Naive thymus-derived CD4-positive, alpha-beta T cell (primary cell): ENCODE measurements at regions of chr11 and their contacts with region 1.

Region 1: DNA sequence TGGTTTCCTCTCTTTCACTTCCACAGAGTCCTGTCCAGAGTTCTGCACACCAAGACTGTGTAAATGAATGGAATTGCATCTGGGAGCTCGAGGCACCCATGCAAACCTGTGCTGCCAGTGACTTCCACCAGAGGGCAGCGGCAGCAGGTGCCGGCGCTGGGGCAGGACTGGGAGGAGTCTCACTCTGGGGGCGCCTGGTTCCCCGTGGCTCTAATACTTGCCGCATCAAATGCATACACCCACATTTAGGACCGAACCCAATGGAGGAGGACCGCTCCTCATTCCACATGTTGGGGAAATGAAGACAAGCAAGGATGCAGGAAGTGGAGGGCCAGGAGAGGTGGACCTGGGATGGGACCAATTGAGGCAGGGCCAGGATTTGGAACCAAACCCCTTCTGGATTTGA is 1.1 kb upstream of the CD6 start:
- DNase-seq: peak; percentile 66 to 85 (median 80)
- ATAC-seq: peak; percentile 83
- H3K4me3 ChIP-seq: peak overlapping the region; percentile 83
- H3K4me3 Mint-ChIP-seq: peak overlapping the region; percentile 92 to 98 (median 96)
- H3K27ac ChIP-seq: peak overlapping the region; percentile 96
- H3K27ac Mint-ChIP-seq: peak overlapping the region; percentile 39 to 99 (median 95)
- H3K4me1 ChIP-seq: peaks cover 13 to 17% of the 10 kb centered on the region in 2 donors
- H3K4me1 Mint-ChIP-seq: peaks cover 14 to 29% (median 20%) of the 10 kb centered on the region in 7 donors
- H3K27me3 ChIP-seq: no peaks in the 10 kb centered on the region
- H3K27me3 Mint-ChIP-seq: peaks cover 0 to 11% (median 0%) of the 10 kb centered on the region in 5 donors

Region 2: DNA sequence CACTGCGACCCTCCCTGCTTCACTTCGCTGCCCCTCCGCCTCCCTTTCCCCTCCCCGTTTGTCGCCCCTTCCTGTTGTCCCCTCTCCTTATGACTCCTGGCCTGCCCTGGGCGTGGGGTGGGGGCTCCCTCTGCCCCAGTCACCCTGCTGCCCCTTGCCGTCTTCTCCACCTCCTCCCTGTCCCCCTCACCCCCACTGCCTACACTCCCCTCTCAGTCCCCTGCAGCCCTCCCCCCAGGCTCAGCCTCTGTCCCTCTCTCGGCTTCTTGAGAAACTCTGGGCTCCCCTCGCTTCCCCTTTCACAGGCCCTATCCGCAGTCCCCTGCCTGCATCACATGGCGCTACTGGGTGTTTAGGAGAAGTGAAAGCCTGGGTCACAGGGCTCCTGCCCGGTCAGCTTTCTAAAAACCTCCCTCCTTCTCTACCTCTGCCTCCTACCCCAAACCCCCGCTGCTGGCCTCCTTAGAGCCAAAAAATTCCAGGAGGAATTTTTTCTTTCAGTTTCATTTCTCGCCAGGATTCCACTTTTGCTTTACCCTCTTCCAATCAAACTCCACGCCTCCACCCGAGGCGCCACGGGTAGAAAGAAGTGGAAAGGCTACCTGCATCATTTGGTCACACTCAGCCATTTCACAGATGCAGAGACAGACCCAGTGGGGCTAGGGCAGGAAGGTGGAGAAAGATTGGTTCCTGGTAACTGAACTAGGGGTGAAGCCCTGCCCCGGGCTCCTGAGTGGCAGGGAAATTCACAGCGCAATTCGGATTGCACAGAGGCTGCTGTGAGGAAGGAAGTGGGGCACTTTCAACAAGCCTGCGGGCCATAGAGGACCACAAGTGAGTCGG is 18.3 kb before region 1 on chr11 and contains the start of gene SLC15A3:
- CTCF ChIA-PET with region 1: interaction called, 4 read pairs
- POLR2A ChIA-PET with region 1: interaction called, 16 read pairs
- intact Hi-C with region 1: no loop called
- DNase-seq: peak in 7 of 9 donors; percentile 55 to 66 (median 64)
- ATAC-seq: peak; percentile 73
- H3K4me3 ChIP-seq: peak within 1 kb of the TSS; percentile 58
- H3K4me3 Mint-ChIP-seq: peak within 1 kb of the TSS; percentile 83 to 96 (median 90)
- H3K27ac ChIP-seq: peak within 1 kb of the TSS; percentile 67
- H3K27ac Mint-ChIP-seq: peak within 1 kb of the TSS; percentile 81 to 97 (median 96)
- H3K4me1 ChIP-seq: peaks cover 0 to 21% of the 10 kb centered on the region in 2 donors
- H3K4me1 Mint-ChIP-seq: peaks cover 16 to 44% (median 40%) of the 10 kb centered on the region in 7 donors
- H3K27me3 ChIP-seq: no peaks in the 10 kb centered on the region
- H3K27me3 Mint-ChIP-seq: peaks cover 0 to 44% (median 0%) of the 10 kb centered on the region in 5 donors
- total RNA-seq, gene SLC15A3: 2.9 to 101 (median 10.8) TPM

Region 3: GRCh38 chr11:61021661-61022212 is 51.4 kb after region 1 on chr11:
- CTCF ChIA-PET with region 1: interaction called, 10 read pairs
- POLR2A ChIA-PET with region 1: no interaction called
- intact Hi-C with region 1: loop called (anchors 1 to 2 kb)
- DNase-seq: peak; percentile 72 to 98 (median 96)
- ATAC-seq: peak; percentile 91
- H3K4me3 ChIP-seq: peak overlapping the region; percentile 53
- H3K4me3 Mint-ChIP-seq: peak overlapping the region; percentile 68 to 90 (median 81)
- H3K27ac ChIP-seq: peak overlapping the region; percentile 82
- H3K27ac Mint-ChIP-seq: peak overlapping the region; percentile 88 to 100 (median 98)
- H3K4me1 ChIP-seq: peaks cover 49 to 56% of the 10 kb centered on the region in 2 donors
- H3K4me1 Mint-ChIP-seq: peaks cover 40 to 79% (median 76%) of the 10 kb centered on the region in 7 donors
- H3K27me3 ChIP-seq: no peaks in the 10 kb centered on the region
- H3K27me3 Mint-ChIP-seq: no peaks in the 10 kb centered on the region

Region 4: DNA sequence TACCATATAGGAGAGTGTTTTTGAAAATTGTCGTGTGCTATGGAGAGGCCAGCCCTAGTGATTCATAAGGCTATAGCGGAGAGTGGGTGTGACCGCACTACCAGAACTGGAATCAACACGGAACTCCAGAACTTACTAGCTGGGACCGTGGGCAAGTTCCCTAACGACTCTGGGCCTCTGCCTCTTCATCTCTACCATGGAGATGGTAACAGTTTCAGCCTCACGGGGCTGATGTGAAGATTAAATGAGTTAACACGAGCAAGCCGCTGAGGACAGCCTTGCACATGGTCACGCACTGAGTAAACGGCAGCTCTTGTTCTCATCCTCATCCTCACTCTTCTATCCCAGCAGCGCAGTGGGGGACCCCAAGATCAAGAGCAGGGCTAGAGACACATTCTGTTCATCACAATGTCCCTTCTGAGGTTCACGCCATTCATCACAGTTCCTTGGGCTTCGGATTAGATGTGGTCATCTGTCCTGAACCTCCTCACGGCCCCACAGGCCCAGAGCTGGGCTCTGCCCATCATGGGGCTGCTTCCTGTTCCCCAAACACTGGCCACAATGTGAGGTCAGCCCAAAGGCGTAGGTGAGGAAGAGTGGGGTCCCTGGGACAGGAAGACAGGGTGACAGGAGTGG is 84.7 kb after region 1 on chr11:
- CTCF ChIA-PET with region 1: interaction called, 20 read pairs
- POLR2A ChIA-PET with region 1: interaction called, 5 read pairs
- intact Hi-C with region 1: loop called in 1 of 2 experiments (anchors 1 kb)
- DNase-seq: no peak
- ATAC-seq: no peak
- H3K4me3 ChIP-seq: no peak overlapping the region
- H3K4me3 Mint-ChIP-seq: peak overlapping the region in 3 of 10 donors; percentile 9 to 33 (median 20)
- H3K27ac ChIP-seq: no peak overlapping the region
- H3K27ac Mint-ChIP-seq: peak overlapping the region in 2 of 9 donors; percentile 31 to 74
- H3K4me1 ChIP-seq: peaks cover 2 to 26% of the 10 kb centered on the region in 2 donors
- H3K4me1 Mint-ChIP-seq: peaks cover 20 to 68% (median 60%) of the 10 kb centered on the region in 7 donors
- H3K27me3 ChIP-seq: no peaks in the 10 kb centered on the region
- H3K27me3 Mint-ChIP-seq: no peaks in the 10 kb centered on the region

Region 5: GRCh38 chr11:61129639-61130523 is 159.5 kb after region 1 on chr11:
- CTCF ChIA-PET with region 1: interaction called, 6 read pairs
- POLR2A ChIA-PET with region 1: interaction called, 23 read pairs
- intact Hi-C with region 1: loop called (anchors 1 kb)
- DNase-seq: peak; percentile 82 to 94 (median 88)
- ATAC-seq: peak; percentile 96
- H3K4me3 ChIP-seq: no peak overlapping the region
- H3K4me3 Mint-ChIP-seq: peak overlapping the region; percentile 15 to 77 (median 54)
- H3K27ac ChIP-seq: peak overlapping the region; percentile 57
- H3K27ac Mint-ChIP-seq: peak overlapping the region; percentile 4 to 87 (median 72)
- H3K4me1 ChIP-seq: peaks cover 4 to 18% of the 10 kb centered on the region in 2 donors
- H3K4me1 Mint-ChIP-seq: peaks cover 10 to 29% (median 23%) of the 10 kb centered on the region in 7 donors
- H3K27me3 ChIP-seq: no peaks in the 10 kb centered on the region
- H3K27me3 Mint-ChIP-seq: no peaks in the 10 kb centered on the region